ENCODE measurements at regions of chr12 and their contacts with region 1.

Region 1: DNA sequence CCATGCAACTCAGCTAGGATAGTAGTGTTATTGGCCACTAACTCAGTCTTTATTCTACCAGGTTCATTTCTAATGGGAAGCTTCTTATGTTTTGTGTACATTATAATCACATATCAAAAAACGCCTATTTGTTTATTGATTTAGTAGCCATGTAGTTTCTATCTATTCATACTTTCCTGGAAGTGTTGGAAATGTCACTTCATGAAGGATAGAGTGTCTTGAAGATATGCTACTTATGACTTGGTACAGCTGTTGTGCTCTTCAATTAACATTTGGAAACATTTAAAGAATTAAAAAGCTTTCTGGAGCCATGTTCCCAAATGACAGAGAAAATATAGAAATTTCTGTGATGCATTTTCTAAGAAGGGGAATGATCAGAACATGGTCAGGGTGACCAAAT is 307.5 kb downstream of the ETNK1 start:
- DNase-seq: no peak
- CTCF ChIP-seq: no peak

Region 2: DNA sequence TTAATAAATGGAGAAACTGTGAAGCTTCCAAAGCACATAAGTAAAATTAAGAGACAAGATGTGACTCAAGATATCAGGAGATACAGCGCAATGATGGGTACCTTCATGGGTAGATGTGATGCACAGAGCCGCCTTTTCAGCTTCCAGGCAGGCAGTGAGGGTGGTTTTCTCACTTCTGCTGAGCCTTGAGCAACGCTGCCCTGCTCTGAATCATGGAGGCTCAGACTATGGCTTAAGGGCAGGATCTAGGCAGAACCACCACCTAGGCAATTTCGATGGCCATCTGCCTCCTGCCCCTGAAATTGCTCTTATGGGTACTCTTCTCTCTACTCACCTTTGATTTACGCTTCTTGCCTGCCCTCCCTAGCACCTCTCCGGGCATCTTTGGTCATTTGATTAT is 17.9 kb before region 1 on chr12:
- CTCF ChIA-PET with region 1: interaction called, 15 read pairs
- POLR2A ChIA-PET with region 1: no interaction called
- DNase-seq: no peak
- CTCF ChIP-seq: no peak